ENCODE measurements at regions of chr3 and their contacts with region 1.

Region 1: GRCh38 chr3:184314363-184314699 is at the start of gene EIF4G1:
- DNase-seq: peak; percentile 94
- ATAC-seq: peak; percentile 76 to 84
- H3K4me3 ChIP-seq: peak within 1 kb of the TSS; percentile 73 to 94 (median 90)
- H3K27ac ChIP-seq: peak within 1 kb of the TSS; percentile 92 to 100 (median 98)
- H3K4me1 ChIP-seq: peaks cover 38 to 45% of the 10 kb centered on the region in 2 donors
- H3K27me3 ChIP-seq: no peaks in the 10 kb centered on the region
- CTCF ChIP-seq: no peak
- POLR2A ChIP-seq: peak; percentile 66 to 74
- total RNA-seq, gene EIF4G1: 474 to 863 (median 735) TPM

Region 2: DNA sequence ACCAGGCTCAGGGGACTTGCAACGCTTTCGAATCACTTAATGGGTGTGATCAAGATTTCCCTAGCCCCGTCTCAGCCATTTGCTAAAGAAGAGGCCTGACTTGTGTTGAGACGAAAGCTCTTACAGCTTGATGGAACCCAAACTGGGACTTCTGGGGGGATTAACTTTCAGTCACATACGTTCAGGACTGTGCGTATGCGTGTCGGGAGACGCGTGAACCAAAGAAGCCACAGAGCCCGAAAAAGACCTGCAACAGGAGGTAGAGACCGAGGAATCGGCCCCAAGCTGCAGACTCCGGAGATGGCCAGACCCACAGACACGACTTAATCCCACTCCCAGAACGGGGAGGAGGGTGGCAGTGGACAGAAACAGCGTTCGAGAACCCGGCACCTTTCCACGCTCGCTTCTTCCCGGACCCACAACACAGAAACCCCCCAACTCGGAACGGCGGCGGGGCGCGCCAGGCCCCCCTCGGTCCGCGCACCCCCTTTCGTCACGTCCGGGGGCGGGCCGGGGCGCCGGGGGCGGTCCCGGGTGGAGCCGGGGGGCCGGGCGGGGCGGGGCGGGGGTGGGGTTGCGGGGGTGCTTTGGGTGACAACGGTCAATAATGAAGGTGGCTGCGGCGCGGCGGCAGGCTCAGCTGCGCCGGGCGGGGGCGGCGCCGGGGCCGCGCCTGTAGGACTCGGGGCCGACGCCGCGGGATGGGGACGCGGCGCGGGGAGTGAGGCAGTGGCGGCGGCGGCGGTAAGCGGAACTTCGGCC is 1521.2 kb before region 1 on chr3 and contains the start of gene ATP11B:
- in situ Hi-C with region 1: no loop called
- intact Hi-C with region 1: loop called (anchors 10 kb)
- DNase-seq: peak; percentile 47 to 59
- ATAC-seq: peak; percentile 77 to 81
- H3K4me3 ChIP-seq: peak within 1 kb of the TSS; percentile 78 to 94 (median 86)
- H3K27ac ChIP-seq: peak within 1 kb of the TSS; percentile 88 to 95 (median 94)
- H3K4me1 ChIP-seq: peaks cover 20 to 26% of the 10 kb centered on the region in 2 donors
- H3K27me3 ChIP-seq: no peaks in the 10 kb centered on the region
- CTCF ChIP-seq: no peak
- POLR2A ChIP-seq: peak; percentile 74 to 88
- total RNA-seq, gene ATP11B: 16.3 to 44.6 (median 23.4) TPM

Region 3: GRCh38 chr3:183975981-183976662 is 338.2 kb before region 1 on chr3:
- in situ Hi-C with region 1: no loop called
- intact Hi-C with region 1: loop called (anchors 5 kb)
- DNase-seq: no peak
- ATAC-seq: no peak
- H3K4me3 ChIP-seq: no peak overlapping the region
- H3K27ac ChIP-seq: peak overlapping the region; percentile 88 to 94 (median 90)
- H3K4me1 ChIP-seq: peaks cover 44 to 52% of the 10 kb centered on the region in 2 donors
- H3K27me3 ChIP-seq: no peaks in the 10 kb centered on the region
- CTCF ChIP-seq: no peak
- POLR2A ChIP-seq: no peak

Region 4: DNA sequence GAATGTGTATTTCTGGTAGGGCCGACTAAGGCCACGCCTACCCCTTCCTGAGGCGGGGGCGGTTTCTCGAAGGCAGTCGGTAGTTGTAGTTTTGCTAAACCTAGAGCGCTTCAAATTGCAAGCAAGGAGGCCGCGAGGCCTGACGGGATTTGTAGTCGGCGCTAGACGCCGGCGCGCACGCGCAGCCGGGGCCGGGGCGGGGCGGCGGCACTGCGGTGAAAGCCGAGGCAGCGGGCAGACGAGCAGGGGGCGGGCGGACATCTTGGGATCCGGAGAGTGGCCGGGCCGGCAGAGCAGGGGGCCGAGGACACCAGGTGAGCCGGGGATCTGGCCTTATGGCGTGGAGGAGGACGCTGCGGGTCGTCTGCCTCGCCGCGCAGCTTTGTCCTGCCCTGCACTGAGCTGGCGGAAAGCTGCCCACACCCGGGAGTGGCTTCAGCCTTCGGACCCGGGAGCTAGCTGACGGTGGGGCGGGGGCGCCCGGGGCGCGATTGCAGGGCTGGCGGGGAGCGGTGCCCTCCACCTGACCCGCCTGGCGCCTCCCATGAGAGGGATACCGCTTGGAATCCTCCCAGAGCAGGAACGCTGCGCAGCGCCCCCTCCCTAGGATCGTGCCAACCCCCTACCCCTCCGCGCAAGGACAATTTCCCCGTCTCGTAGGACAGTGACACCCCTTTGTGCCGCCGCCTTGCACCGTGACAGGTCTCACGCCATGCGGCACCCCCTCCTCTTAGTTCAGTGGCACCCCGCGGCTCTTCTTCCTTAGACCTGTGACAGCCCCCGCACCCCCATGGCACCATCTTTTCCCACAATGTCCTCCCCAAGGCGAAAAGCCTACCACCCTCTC is 139.5 kb before region 1 on chr3 and contains the start of gene AP2M1:
- in situ Hi-C with region 1: loop called in 2 of 4 experiments (anchors 5 to 10 kb)
- intact Hi-C with region 1: no loop called
- DNase-seq: peak; percentile 98 to 100
- ATAC-seq: peak; percentile 94 to 96
- H3K4me3 ChIP-seq: peak within 1 kb of the TSS; percentile 95 to 98 (median 96)
- H3K27ac ChIP-seq: peak within 1 kb of the TSS; percentile 97 to 99 (median 98)
- H3K4me1 ChIP-seq: peaks cover 29 to 39% of the 10 kb centered on the region in 2 donors
- H3K27me3 ChIP-seq: no peaks in the 10 kb centered on the region
- CTCF ChIP-seq: peak in 1 of 5 experiments; percentile 14
- POLR2A ChIP-seq: peak; percentile 88 to 90
- total RNA-seq, gene AP2M1: 110 to 132 (median 117) TPM

Region 5: GRCh38 chr3:184185461-184186308 is 128.6 kb before region 1 on chr3 and contains the start of gene ABCF3:
- in situ Hi-C with region 1: no loop called
- intact Hi-C with region 1: loop called (anchors 5 kb)
- DNase-seq: peak; percentile 99
- ATAC-seq: peak; percentile 92 to 97
- H3K4me3 ChIP-seq: peak within 1 kb of the TSS; percentile 78 to 97 (median 90)
- H3K27ac ChIP-seq: peak within 1 kb of the TSS; percentile 89 to 97 (median 96)
- H3K4me1 ChIP-seq: peaks cover 18 to 21% of the 10 kb centered on the region in 2 donors
- H3K27me3 ChIP-seq: no peaks in the 10 kb centered on the region
- CTCF ChIP-seq: no peak
- POLR2A ChIP-seq: peak; percentile 73 to 91
- total RNA-seq, gene ABCF3: 52.6 to 96.4 (median 63.2) TPM

Region 6: GRCh38 chr3:184335661-184336546 is 21.6 kb after region 1 on chr3:
- in situ Hi-C with region 1: no loop called
- intact Hi-C with region 1: loop called (anchors 2 kb)
- DNase-seq: peak; percentile 69 to 79
- ATAC-seq: peak; percentile 53 to 60
- H3K4me3 ChIP-seq: peak overlapping the region; percentile 75 to 90 (median 82)
- H3K27ac ChIP-seq: peak overlapping the region; percentile 98 to 99 (median 98)
- H3K4me1 ChIP-seq: peaks cover 38 to 47% of the 10 kb centered on the region in 2 donors
- H3K27me3 ChIP-seq: no peaks in the 10 kb centered on the region
- CTCF ChIP-seq: no peak
- POLR2A ChIP-seq: peak; percentile 92 to 93

Measured in gastrocnemius medialis (tissue), 4 donors.